ENCODE measurements at regions of chr1 and their contacts with region 1.

Region 1: GRCh38 chr1:222171005-222171404 is 376.9 kb downstream of the HHIPL2 start:
- DNase-seq: peak; percentile 23
- ATAC-seq: peak; percentile 86
- H3K4me3 ChIP-seq: no peak overlapping the region
- H3K27ac ChIP-seq: no peak overlapping the region
- H3K4me1 ChIP-seq: no peaks in the 10 kb centered on the region
- H3K27me3 ChIP-seq: no peaks in the 10 kb centered on the region
- CTCF ChIP-seq: peak; percentile 47 to 78 (median 66)
- EP300 ChIP-seq: no peak
- POLR2A ChIP-seq: no peak
- RAD21 ChIP-seq: peak; percentile 78

Region 2: DNA sequence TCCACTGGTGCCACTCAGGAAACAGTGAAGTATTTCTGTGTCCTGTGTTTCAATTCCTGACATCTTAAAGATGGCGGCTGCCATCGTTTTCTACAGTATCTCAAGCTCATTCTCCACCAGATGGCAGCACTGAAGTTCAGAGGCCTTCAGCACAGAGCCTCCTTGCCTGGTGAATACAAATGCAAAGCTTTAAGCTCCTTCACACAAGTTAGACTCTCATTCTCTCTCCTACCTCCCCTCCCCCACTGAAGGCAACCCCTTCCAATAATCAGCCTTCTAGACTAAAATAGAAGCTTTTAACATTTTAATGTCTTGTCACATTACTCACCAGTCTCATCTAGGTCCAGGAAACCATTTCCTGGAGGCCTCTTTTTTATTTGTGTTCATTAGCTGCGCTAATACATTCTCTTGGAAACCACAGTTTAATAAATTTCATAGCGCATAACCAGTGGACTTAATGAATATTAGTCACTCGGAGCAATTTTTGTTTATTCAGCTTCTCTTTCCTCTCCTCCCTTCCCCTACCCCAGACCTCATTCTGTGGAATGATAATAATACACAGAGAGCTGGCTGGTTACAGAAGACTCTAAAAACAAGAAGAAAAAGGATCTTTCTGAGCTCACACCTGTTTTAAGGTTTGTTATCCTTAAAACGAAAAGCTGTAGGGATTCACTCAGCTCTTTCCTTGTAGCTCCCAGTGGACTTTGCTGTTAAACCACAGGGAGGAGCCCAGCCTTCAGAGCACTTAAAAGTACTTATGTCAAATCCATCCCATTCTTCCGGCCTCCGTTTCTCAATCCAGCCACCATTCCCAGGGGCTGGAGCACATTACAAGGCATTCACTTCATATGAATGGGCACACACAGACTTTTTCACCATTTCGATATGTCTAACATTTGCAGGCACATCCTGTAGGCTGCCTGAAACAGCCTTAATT is 906.9 kb before region 1 on chr1:
- CTCF ChIA-PET with region 1: interaction called, 13 read pairs
- POLR2A ChIA-PET with region 1: no interaction called
- RAD21 ChIA-PET with region 1: interaction called, 8 read pairs
- SMC1A ChIA-PET with region 1: interaction called, 9 read pairs
- in situ Hi-C with region 1: no loop called
- intact Hi-C with region 1: loop called (anchors 5 kb)
- DNase-seq: peak; percentile 5
- ATAC-seq: peak; percentile 97
- H3K4me3 ChIP-seq: no peak overlapping the region
- H3K27ac ChIP-seq: no peak overlapping the region
- H3K4me1 ChIP-seq: no peaks in the 10 kb centered on the region
- H3K27me3 ChIP-seq: no peaks in the 10 kb centered on the region
- CTCF ChIP-seq: peak; percentile 47 to 57 (median 51); a peak in 5 of 6 replicates
- EP300 ChIP-seq: no peak
- POLR2A ChIP-seq: no peak
- RAD21 ChIP-seq: peak; percentile 51

Region 3: GRCh38 chr1:221478050-221478949 is 692.7 kb before region 1 on chr1:
- CTCF ChIA-PET with region 1: interaction called, 26 read pairs
- POLR2A ChIA-PET with region 1: no interaction called
- RAD21 ChIA-PET with region 1: interaction called, 45 read pairs
- SMC1A ChIA-PET with region 1: interaction called, 36 read pairs
- in situ Hi-C with region 1: loop called (anchors 5 kb)
- intact Hi-C with region 1: loop called (anchors 1 kb)
- DNase-seq: peak; percentile 36
- ATAC-seq: peak; percentile 100
- H3K4me3 ChIP-seq: no peak overlapping the region
- H3K27ac ChIP-seq: no peak overlapping the region
- H3K4me1 ChIP-seq: no peaks in the 10 kb centered on the region
- H3K27me3 ChIP-seq: no peaks in the 10 kb centered on the region; a peak in 1 of 4 replicates
- CTCF ChIP-seq: peak; percentile 76 to 95 (median 87); a peak in 5 of 6 replicates
- EP300 ChIP-seq: no peak
- POLR2A ChIP-seq: no peak
- RAD21 ChIP-seq: peak; percentile 92

Region 4: DNA sequence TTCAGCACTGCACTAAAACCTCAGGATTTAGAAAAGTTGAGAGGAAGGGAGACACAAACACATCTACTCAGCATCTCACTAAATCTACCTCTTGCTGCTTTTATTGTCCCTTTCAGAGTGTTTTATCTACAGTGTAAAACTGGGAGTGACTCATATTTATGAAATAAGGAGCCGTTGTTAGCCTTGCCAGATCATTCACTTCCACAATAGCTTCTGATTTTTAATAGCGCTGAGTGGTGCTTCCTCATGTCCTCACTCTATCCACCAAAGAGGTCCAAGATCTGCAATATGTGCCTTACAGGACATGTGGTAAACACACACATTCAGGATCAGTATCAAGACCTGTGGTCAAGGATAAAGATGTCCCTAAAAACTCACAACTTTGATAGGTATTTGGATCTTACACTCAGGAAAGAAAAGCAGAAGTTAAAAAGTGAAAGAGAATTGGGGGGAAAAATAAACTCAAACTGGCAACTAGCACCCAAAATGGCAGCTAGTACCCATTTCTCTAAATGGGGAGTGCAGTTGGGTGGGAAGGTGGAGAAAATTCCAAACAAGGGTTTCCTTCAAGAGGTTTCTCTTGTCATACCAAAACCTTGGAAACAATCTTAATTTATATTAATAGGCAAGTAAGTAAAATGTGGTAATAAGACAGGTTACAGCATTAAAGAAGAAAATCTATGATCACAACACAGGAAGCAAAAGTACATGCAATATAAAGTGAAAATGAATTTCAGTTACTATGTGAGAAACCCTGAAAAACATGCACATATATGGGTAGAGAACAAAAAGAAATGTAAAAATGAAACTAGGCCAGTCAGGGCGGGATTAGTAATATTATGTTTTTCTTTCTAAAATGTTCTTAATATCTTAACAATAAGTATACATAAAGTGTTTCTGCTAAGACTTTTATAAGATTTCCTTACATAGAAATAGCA is 445.0 kb before region 1 on chr1:
- CTCF ChIA-PET with region 1: no interaction called
- POLR2A ChIA-PET with region 1: no interaction called
- RAD21 ChIA-PET with region 1: no interaction called
- SMC1A ChIA-PET with region 1: interaction called, 3 read pairs
- in situ Hi-C with region 1: loop called (anchors 10 kb)
- intact Hi-C with region 1: no loop called
- DNase-seq: no peak
- ATAC-seq: peak; percentile 67
- H3K4me3 ChIP-seq: peak overlapping the region; percentile 6; the same call in 1 of the 2 replicates
- H3K27ac ChIP-seq: peak overlapping the region; percentile 92
- H3K4me1 ChIP-seq: peaks cover 52% of the 10 kb centered on the region
- H3K27me3 ChIP-seq: no peaks in the 10 kb centered on the region
- CTCF ChIP-seq: no peak
- EP300 ChIP-seq: no peak
- POLR2A ChIP-seq: no peak
- RAD21 ChIP-seq: no peak

Region 5: GRCh38 chr1:222095606-222096475 is 75.2 kb before region 1 on chr1:
- CTCF ChIA-PET with region 1: interaction called, 17 read pairs
- POLR2A ChIA-PET with region 1: no interaction called
- RAD21 ChIA-PET with region 1: interaction called, 5 read pairs
- SMC1A ChIA-PET with region 1: interaction called, 4 read pairs
- in situ Hi-C with region 1: no loop called
- intact Hi-C with region 1: no loop called
- DNase-seq: peak; percentile 25
- ATAC-seq: peak; percentile 95
- H3K4me3 ChIP-seq: no peak overlapping the region
- H3K27ac ChIP-seq: no peak overlapping the region
- H3K4me1 ChIP-seq: no peaks in the 10 kb centered on the region
- H3K27me3 ChIP-seq: no peaks in the 10 kb centered on the region
- CTCF ChIP-seq: peak; percentile 68 to 98 (median 94)
- EP300 ChIP-seq: no peak
- POLR2A ChIP-seq: no peak
- RAD21 ChIP-seq: peak; percentile 67